K562 (cell line): ENCODE measurements at regions of chr15 and their contacts with region 1.

Region 1: GRCh38 chr15:78909791-78910228 is 35.0 kb downstream of the CTSH start:
- DNase-seq: peak; percentile 58 to 64 (median 61)
- ATAC-seq: peak; percentile 87
- H3K4me3 ChIP-seq: no peak overlapping the region
- H3K27ac ChIP-seq: no peak overlapping the region
- H3K4me1 ChIP-seq: no peaks in the 10 kb centered on the region
- H3K27me3 ChIP-seq: no peaks in the 10 kb centered on the region
- CTCF ChIP-seq: peak; percentile 76 to 84 (median 80)
- EP300 ChIP-seq: no peak
- POLR2A ChIP-seq: no peak
- RAD21 ChIP-seq: peak; percentile 49 to 75

Region 2: DNA sequence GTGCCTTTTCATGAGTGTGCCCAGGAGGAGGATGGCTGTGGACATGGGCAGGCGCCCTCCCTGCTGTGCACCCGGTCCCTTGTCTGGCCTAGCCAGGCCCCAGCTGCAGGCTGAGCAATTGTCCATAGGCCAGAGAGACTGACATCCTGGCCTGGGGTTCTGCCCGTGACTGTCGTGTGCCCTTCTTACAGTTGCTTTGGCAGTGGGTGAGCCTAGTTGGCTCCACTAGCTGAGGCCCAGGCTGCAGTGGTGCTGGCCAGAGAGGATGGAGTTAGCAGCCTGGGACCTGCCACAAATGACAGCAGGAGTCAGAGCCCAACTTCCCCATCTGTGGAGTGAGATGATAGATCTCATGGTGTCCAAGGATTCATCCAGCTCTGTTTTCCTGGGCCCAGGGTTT is 259.8 kb before region 1 on chr15:
- CTCF ChIA-PET with region 1: no interaction called
- POLR2A ChIA-PET with region 1: no interaction called
- in situ Hi-C with region 1: no loop called
- intact Hi-C with region 1: no loop called
- DNase-seq: no peak
- ATAC-seq: no peak
- H3K4me3 ChIP-seq: no peak overlapping the region
- H3K27ac ChIP-seq: no peak overlapping the region
- H3K4me1 ChIP-seq: no peaks in the 10 kb centered on the region
- H3K27me3 ChIP-seq: peaks cover 24 to 56% of the 10 kb centered on the region in 2 experiments; a peak in 4 of 5 replicates
- CTCF ChIP-seq: no peak
- EP300 ChIP-seq: no peak
- POLR2A ChIP-seq: no peak
- RAD21 ChIP-seq: no peak

Region 3: DNA sequence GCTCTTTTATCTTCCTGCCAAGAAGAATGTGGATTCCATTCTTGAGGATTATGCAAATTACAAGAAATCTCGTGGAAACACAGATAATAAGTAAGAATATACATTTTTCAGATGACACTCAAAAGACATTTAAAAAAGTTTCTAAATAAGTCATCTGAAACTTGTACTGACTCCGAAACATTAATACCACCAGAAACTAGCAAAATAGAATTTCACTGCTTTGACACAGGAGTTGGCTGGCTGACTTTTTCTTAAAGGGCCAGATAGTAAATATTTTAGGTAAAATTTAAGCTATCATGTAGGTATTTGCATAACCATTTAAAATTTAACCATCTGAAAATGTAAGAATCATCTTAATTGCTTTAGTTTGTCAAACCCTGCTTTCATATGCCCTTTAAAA is 16.3 kb before region 1 on chr15:
- CTCF ChIA-PET with region 1: no interaction called
- POLR2A ChIA-PET with region 1: interaction called, 25 read pairs
- in situ Hi-C with region 1: no loop called
- intact Hi-C with region 1: no loop called
- DNase-seq: no peak
- ATAC-seq: no peak
- H3K4me3 ChIP-seq: no peak overlapping the region
- H3K27ac ChIP-seq: no peak overlapping the region
- H3K4me1 ChIP-seq: no peaks in the 10 kb centered on the region
- H3K27me3 ChIP-seq: no peaks in the 10 kb centered on the region
- CTCF ChIP-seq: no peak
- EP300 ChIP-seq: no peak
- POLR2A ChIP-seq: no peak
- RAD21 ChIP-seq: no peak

Region 4: GRCh38 chr15:78925956-78926670 is 16.3 kb after region 1 on chr15:
- CTCF ChIA-PET with region 1: no interaction called
- POLR2A ChIA-PET with region 1: interaction called, 15 read pairs
- in situ Hi-C with region 1: no loop called
- intact Hi-C with region 1: no loop called
- DNase-seq: no peak
- ATAC-seq: no peak
- H3K4me3 ChIP-seq: no peak overlapping the region
- H3K27ac ChIP-seq: no peak overlapping the region
- H3K4me1 ChIP-seq: peaks cover 6 to 14% of the 10 kb centered on the region in 2 experiments
- H3K27me3 ChIP-seq: no peaks in the 10 kb centered on the region
- CTCF ChIP-seq: no peak
- EP300 ChIP-seq: no peak
- POLR2A ChIP-seq: no peak
- RAD21 ChIP-seq: no peak

Region 5: GRCh38 chr15:78979456-78980320 is 69.9 kb after region 1 on chr15:
- CTCF ChIA-PET with region 1: interaction called, 7 read pairs
- POLR2A ChIA-PET with region 1: no interaction called
- in situ Hi-C with region 1: loop called (anchors 5 kb)
- intact Hi-C with region 1: loop called (anchors 1 kb)
- DNase-seq: peak; percentile 70 to 87 (median 72)
- ATAC-seq: peak; percentile 85
- H3K4me3 ChIP-seq: no peak overlapping the region
- H3K27ac ChIP-seq: no peak overlapping the region
- H3K4me1 ChIP-seq: peaks cover 0 to 7% of the 10 kb centered on the region in 2 experiments; a peak in 4 of 5 replicates
- H3K27me3 ChIP-seq: peaks cover 5 to 29% of the 10 kb centered on the region in 2 experiments; a peak in 2 of 5 replicates
- CTCF ChIP-seq: peak; percentile 73 to 90 (median 85)
- EP300 ChIP-seq: no peak
- POLR2A ChIP-seq: no peak
- RAD21 ChIP-seq: peak; percentile 53 to 85

Region 6: DNA sequence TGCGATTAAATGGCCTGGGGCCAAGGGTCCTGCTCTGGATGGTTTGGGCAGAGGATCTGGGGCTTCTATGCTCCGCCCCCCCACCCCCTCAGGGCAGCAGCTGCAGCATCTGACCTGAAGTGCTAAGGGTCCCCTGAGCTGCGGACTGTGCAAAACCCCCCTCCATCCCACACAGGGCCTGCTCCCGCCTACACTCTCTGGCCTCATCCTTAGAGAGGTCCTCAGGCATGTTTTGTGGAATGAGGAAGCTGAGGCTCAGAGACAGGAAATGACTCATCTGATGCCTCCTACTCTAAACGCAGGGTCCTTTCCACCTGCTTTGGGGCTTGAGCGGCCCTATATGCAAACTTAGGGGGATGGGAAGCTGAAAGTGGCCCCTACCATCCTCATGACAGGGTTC is 94.5 kb after region 1 on chr15:
- CTCF ChIA-PET with region 1: interaction called, 4 read pairs
- POLR2A ChIA-PET with region 1: no interaction called
- in situ Hi-C with region 1: no loop called
- intact Hi-C with region 1: loop called (anchors 2 kb)
- DNase-seq: peak; percentile 27 to 72 (median 38)
- ATAC-seq: peak; percentile 69
- H3K4me3 ChIP-seq: no peak overlapping the region
- H3K27ac ChIP-seq: peak overlapping the region; percentile 49; the same call in 2 of the 3 replicates
- H3K4me1 ChIP-seq: peaks cover 8 to 14% of the 10 kb centered on the region in 2 experiments
- H3K27me3 ChIP-seq: peaks cover 5 to 15% of the 10 kb centered on the region in 2 experiments; a peak in 3 of 5 replicates
- CTCF ChIP-seq: no peak
- EP300 ChIP-seq: peak; percentile 45; the same call in 1 of the 2 replicates
- POLR2A ChIP-seq: no peak
- RAD21 ChIP-seq: no peak

Region 7: GRCh38 chr15:79184465-79184892 is 274.7 kb after region 1 on chr15:
- CTCF ChIA-PET with region 1: interaction called, 9 read pairs
- POLR2A ChIA-PET with region 1: interaction called, 3 read pairs
- in situ Hi-C with region 1: loop called (anchors 10 kb)
- intact Hi-C with region 1: loop called (anchors 10 kb)
- DNase-seq: peak; percentile 68 to 79 (median 70)
- ATAC-seq: peak; percentile 91
- H3K4me3 ChIP-seq: no peak overlapping the region
- H3K27ac ChIP-seq: no peak overlapping the region
- H3K4me1 ChIP-seq: peaks cover 5 to 9% of the 10 kb centered on the region in 2 experiments; a peak in 2 of 5 replicates
- H3K27me3 ChIP-seq: peaks cover 14 to 25% of the 10 kb centered on the region in 2 experiments; a peak in 4 of 5 replicates
- CTCF ChIP-seq: peak; percentile 85 to 93 (median 92)
- EP300 ChIP-seq: no peak
- POLR2A ChIP-seq: no peak
- RAD21 ChIP-seq: peak; percentile 81 to 94